Mammary epithelial cell (primary cell): ENCODE measurements at regions of chr20 and their contacts with region 1.

Region 1: DNA sequence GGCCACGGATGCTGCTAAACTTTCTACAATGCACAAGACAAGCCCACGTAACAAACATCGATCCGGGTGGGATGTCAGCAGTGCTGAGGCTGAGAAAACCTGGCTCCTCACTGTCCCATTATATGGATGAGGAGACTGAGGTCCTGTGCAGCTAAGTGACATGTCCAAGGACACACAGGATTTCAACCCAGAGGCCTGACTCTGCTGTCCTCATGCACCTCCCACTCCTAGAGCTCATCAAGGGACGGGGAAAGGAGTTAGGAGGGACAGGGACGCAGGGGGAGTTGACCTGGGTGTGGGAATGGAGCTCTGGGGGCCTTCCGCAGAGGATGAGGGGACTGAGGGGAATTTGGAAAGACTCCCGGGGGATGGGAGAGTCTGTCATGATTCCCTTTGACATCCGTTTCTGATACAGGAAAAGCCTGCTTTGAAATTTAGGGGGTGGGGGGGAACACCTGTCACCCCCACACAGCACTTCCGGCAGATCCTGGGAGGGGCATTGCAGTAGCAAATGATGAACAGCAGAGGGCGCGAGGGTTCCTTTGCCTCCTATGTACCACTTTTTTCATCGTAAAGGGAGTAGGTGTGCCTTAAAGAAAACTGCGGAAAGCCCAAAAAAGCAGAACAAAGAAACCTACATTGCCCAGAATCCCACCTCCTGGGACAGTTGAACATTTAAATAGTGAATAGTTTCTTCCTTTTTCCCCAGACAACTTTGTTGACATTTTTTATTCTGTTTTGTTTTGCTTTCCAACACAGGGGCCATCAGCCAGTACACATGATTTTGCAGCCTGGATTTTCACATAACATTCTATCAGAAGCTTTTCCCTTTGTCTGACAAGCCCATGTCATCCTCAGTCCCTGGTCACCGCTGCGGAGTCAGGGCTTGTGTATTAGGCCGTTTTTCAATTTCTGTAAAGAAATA is 48.6 kb downstream of the SLC2A10 start:
- DNase-seq: peak; percentile 38
- H3K4me3 ChIP-seq: no peak overlapping the region
- H3K27ac ChIP-seq: no peak overlapping the region
- H3K4me1 ChIP-seq: no peaks in the 10 kb centered on the region
- H3K27me3 ChIP-seq: no peaks in the 10 kb centered on the region
- CTCF ChIP-seq: peak; percentile 92 to 97

Region 2: GRCh38 chr20:46501337-46501942 is 256.6 kb before region 1 on chr20:
- CTCF ChIA-PET with region 1: no interaction called
- dilution Hi-C with region 1: no loop called
- in situ Hi-C with region 1: no loop called
- intact Hi-C with region 1: no loop called
- DNase-seq: no peak
- H3K4me3 ChIP-seq: no peak overlapping the region
- H3K27ac ChIP-seq: no peak overlapping the region
- H3K4me1 ChIP-seq: no peaks in the 10 kb centered on the region
- H3K27me3 ChIP-seq: no peaks in the 10 kb centered on the region
- CTCF ChIP-seq: no peak

Region 3: DNA sequence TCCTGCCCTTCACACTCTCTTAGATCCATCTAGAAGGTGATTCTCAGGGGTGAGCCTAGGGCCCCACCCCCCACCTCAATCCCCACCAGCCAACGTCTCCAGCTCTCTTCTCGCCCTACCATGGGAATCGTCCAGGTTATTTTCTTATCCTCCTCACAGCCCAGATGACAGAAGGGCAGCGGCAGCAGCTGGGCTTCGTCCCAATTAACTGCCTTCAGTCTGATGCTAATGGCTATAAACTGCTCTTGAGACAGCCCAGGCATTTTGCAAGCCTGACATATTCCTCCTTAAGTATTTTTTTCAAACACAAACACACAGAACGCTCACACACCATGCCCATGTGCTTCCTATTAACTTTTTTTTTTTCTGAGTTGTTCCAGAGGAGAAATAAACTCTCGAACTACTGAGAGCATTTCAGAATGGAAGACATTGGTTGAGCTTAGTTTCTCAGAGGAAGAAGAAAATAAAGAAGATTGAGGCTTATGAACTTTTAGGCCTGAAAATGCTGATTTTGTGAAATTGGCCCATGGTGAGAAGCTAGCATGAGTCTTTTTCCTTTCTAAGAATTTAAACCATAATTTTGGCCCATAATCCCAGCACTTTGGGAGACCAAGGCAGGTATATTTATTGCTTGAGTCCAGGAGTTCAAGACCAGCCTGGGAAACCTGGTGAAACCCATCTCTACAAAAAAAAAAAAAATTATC is 261.3 kb after region 1 on chr20:
- CTCF ChIA-PET with region 1: no interaction called
- dilution Hi-C with region 1: no loop called
- in situ Hi-C with region 1: loop called in 1 of 2 experiments (anchors 25 kb)
- intact Hi-C with region 1: loop called (anchors 10 kb)
- DNase-seq: no peak
- H3K4me3 ChIP-seq: no peak overlapping the region
- H3K27ac ChIP-seq: no peak overlapping the region
- H3K4me1 ChIP-seq: no peaks in the 10 kb centered on the region
- H3K27me3 ChIP-seq: peaks cover under 1% of the 10 kb centered on the region
- CTCF ChIP-seq: no peak

Region 4: GRCh38 chr20:47024461-47024937 is 266.5 kb after region 1 on chr20:
- CTCF ChIA-PET with region 1: no interaction called
- dilution Hi-C with region 1: no loop called
- in situ Hi-C with region 1: loop called in 1 of 2 experiments (anchors 25 kb)
- intact Hi-C with region 1: loop called (anchors 10 kb)
- DNase-seq: no peak
- H3K4me3 ChIP-seq: no peak overlapping the region
- H3K27ac ChIP-seq: no peak overlapping the region
- H3K4me1 ChIP-seq: no peaks in the 10 kb centered on the region
- H3K27me3 ChIP-seq: peaks cover 5% of the 10 kb centered on the region
- CTCF ChIP-seq: no peak

Region 5: DNA sequence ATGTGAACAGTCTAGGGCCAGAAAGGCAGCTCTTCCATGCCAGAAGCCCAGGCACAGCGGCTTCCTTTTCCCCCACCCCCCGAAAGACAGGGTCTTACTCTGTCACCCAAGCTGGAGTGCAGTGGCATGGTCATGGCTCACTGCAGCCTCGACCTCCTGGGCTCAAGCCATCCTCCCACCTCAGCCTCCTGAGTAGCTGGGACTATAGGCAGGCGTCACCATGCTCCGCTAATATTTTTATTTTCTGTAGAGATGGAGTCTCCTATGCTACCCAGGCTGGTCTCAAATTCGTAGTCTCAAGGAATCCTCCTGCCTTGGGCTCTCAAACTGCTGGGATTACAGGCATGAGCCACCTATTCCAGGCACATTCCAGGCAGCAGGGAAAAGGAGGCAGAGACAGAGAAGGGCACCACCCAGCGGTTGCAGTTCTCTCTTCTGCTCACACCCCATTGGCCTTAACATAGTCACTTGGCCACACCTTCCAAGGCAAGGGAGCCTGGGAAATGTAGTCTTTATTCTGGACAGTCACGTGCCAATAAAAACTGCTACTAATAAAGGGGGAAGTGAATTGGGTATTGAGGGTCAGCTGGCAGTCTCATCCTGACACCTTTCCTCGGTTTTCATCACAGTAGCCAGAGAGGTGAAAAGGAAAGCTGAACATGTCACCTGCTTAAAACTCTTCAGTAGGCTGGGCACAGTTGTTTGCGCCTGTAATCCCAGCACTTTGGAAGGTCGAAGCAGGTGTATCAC is 392.6 kb after region 1 on chr20:
- CTCF ChIA-PET with region 1: no interaction called
- dilution Hi-C with region 1: no loop called
- in situ Hi-C with region 1: loop called (anchors 5 to 10 kb)
- intact Hi-C with region 1: loop called (anchors 1 kb)
- DNase-seq: peak; percentile 54
- H3K4me3 ChIP-seq: no peak overlapping the region
- H3K27ac ChIP-seq: no peak overlapping the region
- H3K4me1 ChIP-seq: peaks cover 8% of the 10 kb centered on the region
- H3K27me3 ChIP-seq: no peaks in the 10 kb centered on the region
- CTCF ChIP-seq: peak; percentile 63 to 66

Region 6: GRCh38 chr20:47196091-47197081 is 438.4 kb after region 1 on chr20:
- CTCF ChIA-PET with region 1: interaction called, 5 read pairs
- dilution Hi-C with region 1: no loop called
- in situ Hi-C with region 1: no loop called
- intact Hi-C with region 1: loop called (anchors 2 kb)
- DNase-seq: peak; percentile 47
- H3K4me3 ChIP-seq: no peak overlapping the region
- H3K27ac ChIP-seq: no peak overlapping the region
- H3K4me1 ChIP-seq: peaks cover 10% of the 10 kb centered on the region
- H3K27me3 ChIP-seq: no peaks in the 10 kb centered on the region
- CTCF ChIP-seq: peak; percentile 86 to 96

Region 7: GRCh38 chr20:47392015-47392720 is 634.2 kb after region 1 on chr20:
- CTCF ChIA-PET with region 1: no interaction called
- dilution Hi-C with region 1: no loop called
- in situ Hi-C with region 1: loop called (anchors 10 kb)
- intact Hi-C with region 1: no loop called
- DNase-seq: peak; percentile 97
- H3K4me3 ChIP-seq: no peak overlapping the region
- H3K27ac ChIP-seq: peak overlapping the region; percentile 99
- H3K4me1 ChIP-seq: peaks cover 21% of the 10 kb centered on the region
- H3K27me3 ChIP-seq: no peaks in the 10 kb centered on the region
- CTCF ChIP-seq: no peak

Region 8: DNA sequence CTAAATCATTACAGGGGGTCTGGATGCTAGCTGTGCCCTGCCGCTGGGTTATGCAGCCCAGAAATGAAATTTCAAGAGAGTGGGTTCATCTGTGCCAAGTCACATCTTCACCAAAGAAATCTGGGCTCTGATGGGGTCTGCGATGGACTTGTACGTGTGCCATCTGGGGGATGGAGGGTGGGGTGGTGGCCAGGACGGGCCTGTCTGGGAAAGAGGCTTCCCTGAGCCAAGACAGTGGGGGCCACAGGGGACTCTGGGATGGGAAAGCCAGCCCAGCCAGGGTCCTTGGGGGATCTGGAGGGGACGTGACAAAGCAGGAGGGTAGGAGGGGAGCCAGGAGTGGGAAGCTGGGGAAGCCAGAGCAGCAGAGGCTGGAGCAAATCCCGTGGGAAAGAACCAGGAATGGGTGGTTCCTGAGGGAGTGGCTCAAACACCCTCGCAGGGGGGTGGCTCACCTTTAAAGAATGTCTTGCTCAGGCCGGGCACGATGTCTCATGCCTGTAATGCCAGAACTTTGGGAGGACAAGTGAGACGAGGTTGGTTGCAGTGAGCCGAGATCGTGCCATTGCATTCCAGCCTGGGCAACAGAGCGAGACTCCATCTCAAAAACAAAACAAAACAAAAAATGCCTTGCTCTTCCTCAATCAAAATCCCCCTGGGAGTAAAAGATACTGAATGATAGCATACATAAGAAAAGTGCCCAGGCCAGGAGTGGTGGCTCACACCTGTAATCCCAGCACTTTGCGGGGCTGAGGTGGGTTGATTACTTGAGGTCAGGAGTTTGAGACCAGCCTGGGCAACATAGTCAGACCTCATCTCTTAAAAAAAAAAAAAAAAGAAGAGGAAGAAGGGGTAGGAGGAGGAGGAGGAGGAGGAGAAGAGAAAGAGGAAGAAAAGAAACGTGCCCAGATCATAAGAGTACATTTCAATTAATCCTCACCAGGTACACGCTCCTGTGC is 1063.7 kb after region 1 on chr20:
- CTCF ChIA-PET with region 1: no interaction called
- dilution Hi-C with region 1: no loop called
- in situ Hi-C with region 1: no loop called
- intact Hi-C with region 1: no loop called
- DNase-seq: peak; percentile 92
- H3K4me3 ChIP-seq: no peak overlapping the region
- H3K27ac ChIP-seq: peak overlapping the region; percentile 87
- H3K4me1 ChIP-seq: peaks cover 21% of the 10 kb centered on the region
- H3K27me3 ChIP-seq: no peaks in the 10 kb centered on the region
- CTCF ChIP-seq: no peak